CD4-positive, alpha-beta T cell (primary cell): ENCODE measurements at regions of chr20 and their contacts with region 1.

Region 1: DNA sequence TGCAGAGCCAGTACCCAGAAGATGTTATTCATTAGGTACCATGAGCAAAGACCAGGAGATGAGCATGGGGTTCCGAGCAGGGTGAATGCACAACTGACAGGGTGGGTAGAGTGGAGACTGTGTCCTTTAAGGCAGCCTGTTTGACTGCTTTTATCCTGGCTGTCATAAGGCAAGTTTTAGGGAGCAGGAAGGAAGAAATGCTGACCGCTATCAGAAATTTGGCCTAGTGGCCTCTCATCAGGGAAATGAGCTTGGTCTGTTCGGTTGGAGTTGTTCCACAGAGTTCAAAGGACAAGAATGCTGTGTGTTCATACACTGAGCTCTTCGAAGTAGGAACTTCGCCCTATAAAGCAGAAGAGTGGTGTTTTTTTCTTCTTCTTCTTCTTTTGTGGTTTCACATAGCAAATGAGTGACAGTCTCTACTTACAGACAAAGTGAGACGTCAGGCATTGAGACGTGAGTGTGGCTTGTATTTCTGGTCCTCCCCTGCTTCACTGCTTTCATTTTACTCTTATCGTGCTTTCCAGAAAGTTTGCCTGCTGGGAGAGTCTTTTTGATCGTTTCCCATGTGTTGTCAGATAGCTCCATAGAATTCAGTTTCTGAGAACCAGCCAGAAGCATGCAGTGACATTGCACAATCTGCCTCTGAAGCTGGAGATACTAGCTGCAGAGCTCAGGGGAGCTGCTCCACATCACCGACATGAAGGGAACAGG is at the start of gene CASS4:
- DNase-seq: peak in 9 of 14 experiments; percentile 17 to 79 (median 49)
- ATAC-seq: peak; percentile 83
- H3K4me3 ChIP-seq: peak within 1 kb of the TSS; percentile 62
- H3K4me3 Mint-ChIP-seq: peak within 1 kb of the TSS; percentile 95
- H3K27ac ChIP-seq: peak within 1 kb of the TSS; percentile 50 to 79
- H3K27ac Mint-ChIP-seq: peak within 1 kb of the TSS; percentile 91
- H3K4me1 ChIP-seq: peaks cover 45% of the 10 kb centered on the region
- H3K4me1 Mint-ChIP-seq: peaks cover 59% of the 10 kb centered on the region
- H3K27me3 ChIP-seq: no peaks in the 10 kb centered on the region
- H3K27me3 Mint-ChIP-seq: no peaks in the 10 kb centered on the region
- CTCF ChIP-seq: no peak
- total RNA-seq, gene CASS4: 37.0 to 39.8 TPM

Region 2: DNA sequence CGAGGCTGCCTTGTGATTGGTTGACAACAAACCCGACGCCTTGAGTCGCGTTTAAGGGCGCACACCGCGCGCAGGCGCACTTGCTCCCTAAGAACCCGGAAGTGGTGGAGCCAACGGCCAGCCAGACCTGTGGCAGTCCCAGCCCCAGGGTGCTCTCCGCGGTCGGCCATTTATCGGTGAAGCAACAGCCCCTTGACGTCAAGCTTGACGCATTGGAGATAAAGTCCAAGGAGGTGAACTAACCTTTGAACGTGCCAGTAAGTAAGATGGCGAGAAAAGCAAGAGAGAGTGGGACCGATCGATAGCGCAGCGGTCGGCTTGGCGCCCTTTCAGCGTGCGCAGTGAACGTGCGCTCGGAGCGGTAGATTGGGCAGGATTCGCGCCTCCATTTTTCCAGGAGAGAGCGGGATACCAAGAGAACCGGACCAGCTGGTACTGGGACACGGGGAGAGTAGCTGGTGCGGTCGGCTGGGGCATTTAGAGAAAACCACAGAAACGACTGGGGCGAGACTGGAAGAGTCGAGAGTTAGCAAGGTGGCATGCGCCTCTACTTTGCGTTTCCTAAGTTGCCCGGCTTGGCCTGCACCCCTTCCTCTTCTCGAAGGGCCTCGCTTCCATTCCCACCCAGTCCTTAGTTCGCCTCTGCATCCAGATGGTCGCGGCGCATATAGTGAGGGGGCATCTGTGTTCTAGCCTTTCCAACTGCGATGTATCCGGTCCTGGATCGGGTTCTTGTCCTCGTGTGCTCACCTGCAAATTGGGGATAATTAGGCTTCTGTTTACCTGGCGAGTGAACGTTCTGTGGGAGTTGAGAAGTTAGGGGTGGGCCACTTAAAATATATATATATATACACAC is 19.4 kb before region 1 on chr20 and contains the start of gene CSTF1:
- CTCF ChIA-PET with region 1: interaction called, 6 read pairs
- POLR2A ChIA-PET with region 1: interaction called, 45 read pairs
- intact Hi-C with region 1: loop called in 1 of 2 experiments (anchors 1 kb)
- DNase-seq: peak; percentile 98 to 100 (median 99)
- ATAC-seq: peak; percentile 83
- H3K4me3 ChIP-seq: peak within 1 kb of the TSS; percentile 88
- H3K4me3 Mint-ChIP-seq: no peak within 1 kb of the TSS
- H3K27ac ChIP-seq: peak within 1 kb of the TSS; percentile 89 to 93
- H3K27ac Mint-ChIP-seq: no peak within 1 kb of the TSS
- H3K4me1 ChIP-seq: peaks cover 24% of the 10 kb centered on the region
- H3K4me1 Mint-ChIP-seq: peaks cover 28% of the 10 kb centered on the region
- H3K27me3 ChIP-seq: no peaks in the 10 kb centered on the region
- H3K27me3 Mint-ChIP-seq: no peaks in the 10 kb centered on the region
- CTCF ChIP-seq: no peak
- total RNA-seq, gene CSTF1: 20.7 to 21.8 TPM

Region 3: GRCh38 chr20:56422076-56422823 is 10.3 kb after region 1 on chr20:
- CTCF ChIA-PET with region 1: interaction called, 5 read pairs
- POLR2A ChIA-PET with region 1: interaction called, 43 read pairs
- intact Hi-C with region 1: loop called in 1 of 2 experiments (anchors 1 kb)
- DNase-seq: peak in 4 of 14 experiments; percentile 27 to 54 (median 45)
- ATAC-seq: no peak
- H3K4me3 ChIP-seq: no peak overlapping the region
- H3K4me3 Mint-ChIP-seq: peak overlapping the region; percentile 68
- H3K27ac ChIP-seq: peak overlapping the region in 1 of 2 donors; percentile 4
- H3K27ac Mint-ChIP-seq: peak overlapping the region; percentile 91
- H3K4me1 ChIP-seq: peaks cover 62% of the 10 kb centered on the region
- H3K4me1 Mint-ChIP-seq: peaks cover 64% of the 10 kb centered on the region
- H3K27me3 ChIP-seq: no peaks in the 10 kb centered on the region
- H3K27me3 Mint-ChIP-seq: no peaks in the 10 kb centered on the region
- CTCF ChIP-seq: no peak

Region 4: DNA sequence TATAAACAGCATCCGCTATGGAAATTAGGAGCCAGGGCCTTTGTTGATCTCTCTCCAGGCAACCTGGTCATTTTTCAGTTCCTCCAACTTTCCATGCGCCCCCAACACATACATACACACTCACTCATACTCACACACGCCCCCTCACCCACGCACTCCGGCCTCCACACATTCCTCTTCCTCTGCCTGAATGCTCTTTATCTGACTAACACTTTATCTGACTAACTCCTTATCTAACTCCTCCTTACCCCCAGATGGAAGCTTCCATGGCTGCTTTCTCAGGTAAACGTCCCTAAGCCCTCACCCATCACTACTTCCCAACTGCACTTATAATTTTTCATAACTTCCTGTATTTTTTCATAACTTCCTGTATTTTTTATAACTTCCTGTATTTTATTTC is 17.6 kb after region 1 on chr20:
- CTCF ChIA-PET with region 1: interaction called, 4 read pairs
- POLR2A ChIA-PET with region 1: interaction called, 11 read pairs
- intact Hi-C with region 1: no loop called
- DNase-seq: peak in 3 of 14 experiments; percentile 22 to 31 (median 26)
- ATAC-seq: peak; percentile 29
- H3K4me3 ChIP-seq: peak overlapping the region; percentile 48
- H3K4me3 Mint-ChIP-seq: peak overlapping the region; percentile 86
- H3K27ac ChIP-seq: peak overlapping the region; percentile 52 to 71
- H3K27ac Mint-ChIP-seq: peak overlapping the region; percentile 78
- H3K4me1 ChIP-seq: peaks cover 48% of the 10 kb centered on the region
- H3K4me1 Mint-ChIP-seq: peaks cover 65% of the 10 kb centered on the region
- H3K27me3 ChIP-seq: no peaks in the 10 kb centered on the region
- H3K27me3 Mint-ChIP-seq: no peaks in the 10 kb centered on the region
- CTCF ChIP-seq: no peak

Region 5: GRCh38 chr20:56439771-56440291 is 27.9 kb after region 1 on chr20:
- CTCF ChIA-PET with region 1: interaction called, 3 read pairs
- POLR2A ChIA-PET with region 1: interaction called, 7 read pairs
- intact Hi-C with region 1: loop called in 1 of 2 experiments (anchors 2 kb)
- DNase-seq: peak in 3 of 14 experiments; percentile 26 to 39 (median 37)
- ATAC-seq: peak; percentile 30
- H3K4me3 ChIP-seq: no peak overlapping the region
- H3K4me3 Mint-ChIP-seq: peak overlapping the region; percentile 81
- H3K27ac ChIP-seq: peak overlapping the region; percentile 9 to 32
- H3K27ac Mint-ChIP-seq: peak overlapping the region; percentile 89
- H3K4me1 ChIP-seq: peaks cover 61% of the 10 kb centered on the region
- H3K4me1 Mint-ChIP-seq: peaks cover 50% of the 10 kb centered on the region
- H3K27me3 ChIP-seq: no peaks in the 10 kb centered on the region
- H3K27me3 Mint-ChIP-seq: no peaks in the 10 kb centered on the region
- CTCF ChIP-seq: no peak

Region 6: DNA sequence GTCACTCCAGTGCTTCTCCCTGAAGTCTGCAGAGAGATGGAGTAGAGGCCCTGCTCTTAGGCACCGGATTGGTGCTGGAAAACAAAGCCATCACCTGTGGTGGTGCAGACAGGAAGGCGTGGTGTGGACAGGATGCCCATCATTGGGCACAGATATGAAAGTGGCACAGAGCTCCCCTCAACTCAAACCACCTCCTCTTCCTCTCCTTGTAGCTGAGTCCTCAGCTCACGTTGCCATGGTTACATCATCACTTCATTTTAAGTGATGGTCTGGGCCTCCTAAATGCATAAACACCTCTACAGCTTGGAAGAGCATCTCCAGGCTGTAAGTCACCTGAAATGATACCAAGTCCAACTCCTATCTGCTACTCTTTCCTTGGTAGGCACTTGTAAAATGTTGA is 48.5 kb after region 1 on chr20:
- CTCF ChIA-PET with region 1: interaction called, 3 read pairs
- POLR2A ChIA-PET with region 1: interaction called, 10 read pairs
- intact Hi-C with region 1: loop called in 1 of 2 experiments (anchors 2 kb)
- DNase-seq: peak in 10 of 14 experiments; percentile 14 to 90 (median 33)
- ATAC-seq: peak; percentile 96
- H3K4me3 ChIP-seq: no peak overlapping the region
- H3K4me3 Mint-ChIP-seq: no peak overlapping the region
- H3K27ac ChIP-seq: peak overlapping the region; percentile 31 to 74
- H3K27ac Mint-ChIP-seq: peak overlapping the region; percentile 78
- H3K4me1 ChIP-seq: peaks cover 30% of the 10 kb centered on the region
- H3K4me1 Mint-ChIP-seq: peaks cover 41% of the 10 kb centered on the region
- H3K27me3 ChIP-seq: no peaks in the 10 kb centered on the region
- H3K27me3 Mint-ChIP-seq: no peaks in the 10 kb centered on the region
- CTCF ChIP-seq: no peak

Region 7: DNA sequence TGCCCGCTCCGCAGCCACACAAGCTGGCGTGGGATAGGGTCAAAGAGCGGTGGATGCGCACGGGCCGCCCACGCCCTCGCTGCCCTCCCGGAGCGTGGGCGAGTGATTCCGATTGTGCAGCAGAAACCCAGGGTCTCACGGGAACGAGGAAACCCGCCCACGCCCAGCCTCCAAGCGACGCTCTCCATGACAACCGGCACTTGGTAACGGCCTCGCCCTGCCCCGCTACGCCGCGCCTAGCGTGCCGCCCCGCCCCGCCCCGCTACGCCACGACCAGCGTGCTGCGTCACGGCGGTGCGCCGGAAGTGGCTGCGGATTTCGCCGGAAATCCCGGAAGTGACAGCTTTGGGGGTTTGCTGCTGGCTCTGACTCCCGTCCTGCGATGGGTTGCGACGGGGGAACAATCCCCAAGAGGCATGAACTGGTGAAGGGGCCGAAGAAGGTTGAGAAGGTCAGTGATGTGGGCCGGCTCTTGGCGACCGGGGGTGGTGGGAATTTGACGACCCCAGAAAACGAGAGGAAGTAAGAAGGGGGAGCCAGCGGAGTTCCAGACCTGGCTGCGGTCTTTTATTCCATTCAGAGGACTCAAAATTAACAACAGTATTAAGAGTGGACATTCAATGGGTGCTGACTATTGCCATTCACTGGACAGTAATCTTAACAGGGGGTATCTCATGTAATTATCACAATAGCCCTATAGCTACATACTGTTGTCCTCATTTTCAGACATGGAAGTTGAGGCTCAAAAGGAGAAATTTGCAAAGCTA is 56.6 kb after region 1 on chr20 and contains the start of gene RTF2:
- CTCF ChIA-PET with region 1: interaction called, 5 read pairs
- POLR2A ChIA-PET with region 1: interaction called, 21 read pairs
- intact Hi-C with region 1: loop called in 1 of 2 experiments (anchors 1 kb)
- DNase-seq: peak; percentile 91 to 98 (median 94)
- ATAC-seq: peak; percentile 97
- H3K4me3 ChIP-seq: peak within 1 kb of the TSS; percentile 91
- H3K4me3 Mint-ChIP-seq: peak within 1 kb of the TSS; percentile 99
- H3K27ac ChIP-seq: peak within 1 kb of the TSS; percentile 90 to 93
- H3K27ac Mint-ChIP-seq: peak within 1 kb of the TSS; percentile 98
- H3K4me1 ChIP-seq: peaks cover 38% of the 10 kb centered on the region
- H3K4me1 Mint-ChIP-seq: peaks cover 43% of the 10 kb centered on the region
- H3K27me3 ChIP-seq: no peaks in the 10 kb centered on the region
- H3K27me3 Mint-ChIP-seq: no peaks in the 10 kb centered on the region
- CTCF ChIP-seq: no peak
- total RNA-seq, gene RTF2: 52.7 to 55.2 TPM

Region 8: DNA sequence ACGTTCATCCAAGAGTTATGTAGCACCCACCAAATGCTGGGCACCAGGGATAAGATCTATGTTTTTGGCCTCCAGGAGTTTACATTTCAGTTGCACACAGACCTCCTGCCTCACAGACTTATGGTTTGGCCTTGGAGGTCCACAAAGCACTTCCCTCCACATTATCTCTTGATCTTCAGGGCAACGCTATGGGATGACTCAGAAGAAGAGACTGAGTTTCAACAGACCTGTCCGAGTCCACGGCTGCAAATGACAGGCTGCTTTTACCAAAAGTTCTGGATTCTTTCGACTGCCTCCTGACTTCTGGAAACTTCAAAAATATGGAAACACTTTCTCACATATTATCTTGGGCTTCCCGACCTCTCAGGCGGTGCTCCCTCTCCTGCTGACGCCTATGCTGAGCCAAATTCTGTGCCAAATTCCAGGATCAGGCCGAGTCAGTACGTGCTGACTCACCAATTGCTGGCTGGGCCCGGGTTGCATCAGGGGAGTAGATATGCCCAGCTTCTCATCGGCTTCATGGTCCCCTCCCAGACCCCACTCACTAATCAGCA is 664.3 kb after region 1 on chr20:
- CTCF ChIA-PET with region 1: no interaction called
- POLR2A ChIA-PET with region 1: no interaction called
- intact Hi-C with region 1: no loop called
- DNase-seq: no peak
- ATAC-seq: no peak
- H3K4me3 ChIP-seq: no peak overlapping the region
- H3K4me3 Mint-ChIP-seq: no peak overlapping the region
- H3K27ac ChIP-seq: no peak overlapping the region
- H3K27ac Mint-ChIP-seq: no peak overlapping the region
- H3K4me1 ChIP-seq: no peaks in the 10 kb centered on the region
- H3K4me1 Mint-ChIP-seq: peaks cover 9% of the 10 kb centered on the region
- H3K27me3 ChIP-seq: peaks cover 7 to 18% of the 10 kb centered on the region in 2 experiments
- H3K27me3 Mint-ChIP-seq: peaks cover 31% of the 10 kb centered on the region
- CTCF ChIP-seq: no peak